ENCODE measurements at regions of chr12 and their contacts with region 1.

Region 1: GRCh38 chr12:71562676-71563595 is 100.7 kb downstream of the ZFC3H1 start:
- DNase-seq: no peak
- H3K4me3 ChIP-seq: no peak overlapping the region
- H3K27ac ChIP-seq: no peak overlapping the region
- H3K4me1 ChIP-seq: no peaks in the 10 kb centered on the region
- H3K27me3 ChIP-seq: no peaks in the 10 kb centered on the region
- CTCF ChIP-seq: no peak
- EP300 ChIP-seq: no peak
- POLR2A ChIP-seq: no peak

Region 2: DNA sequence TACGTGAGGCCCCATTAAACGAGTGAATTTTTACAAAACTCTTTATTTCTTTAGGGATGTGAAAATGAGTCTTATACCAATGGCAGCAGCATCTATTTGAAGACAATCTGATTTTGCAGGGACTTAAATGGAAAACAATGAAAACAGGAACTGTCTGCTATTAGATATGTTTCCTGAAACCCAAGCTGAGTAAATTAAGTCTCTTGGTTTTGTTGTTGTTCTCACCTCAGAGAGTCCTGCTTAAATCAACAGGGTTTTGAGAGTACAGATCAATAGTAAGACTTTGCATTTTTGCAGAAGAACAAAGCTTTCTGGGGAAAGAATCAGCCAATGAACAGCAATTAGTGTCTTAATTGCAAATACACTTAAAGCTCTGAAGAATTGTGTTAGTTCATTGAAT is 162.5 kb before region 1 on chr12:
- in situ Hi-C with region 1: no loop called
- intact Hi-C with region 1: loop called (anchors 5 kb)
- DNase-seq: no peak
- H3K4me3 ChIP-seq: no peak overlapping the region
- H3K27ac ChIP-seq: no peak overlapping the region
- H3K4me1 ChIP-seq: no peaks in the 10 kb centered on the region
- H3K27me3 ChIP-seq: no peaks in the 10 kb centered on the region
- CTCF ChIP-seq: no peak
- EP300 ChIP-seq: no peak
- POLR2A ChIP-seq: no peak

Region 3: DNA sequence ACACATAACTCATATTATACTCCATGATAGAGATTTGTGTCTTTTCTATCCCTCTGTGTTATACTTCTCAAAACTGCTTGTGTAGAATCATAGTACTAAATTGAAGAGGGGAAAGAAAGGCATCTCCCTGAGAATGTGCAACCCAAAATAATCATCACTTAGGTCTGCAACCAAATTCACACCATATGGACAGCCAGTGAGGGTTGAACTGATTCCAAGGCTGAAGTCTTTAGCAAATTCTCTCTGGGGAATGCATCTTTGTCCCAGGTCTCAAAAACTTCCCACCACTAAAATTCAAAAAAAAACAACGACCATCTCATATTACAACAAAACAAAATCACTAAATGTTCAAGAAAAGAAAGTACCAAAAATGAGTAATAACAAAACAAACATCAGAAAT is 89.7 kb after region 1 on chr12:
- in situ Hi-C with region 1: no loop called
- intact Hi-C with region 1: no loop called
- DNase-seq: no peak
- H3K4me3 ChIP-seq: no peak overlapping the region
- H3K27ac ChIP-seq: no peak overlapping the region
- H3K4me1 ChIP-seq: peaks cover 5 to 30% (median 16%) of the 10 kb centered on the region in 4 donors
- H3K27me3 ChIP-seq: no peaks in the 10 kb centered on the region
- CTCF ChIP-seq: no peak
- EP300 ChIP-seq: no peak
- POLR2A ChIP-seq: no peak

Region 4: DNA sequence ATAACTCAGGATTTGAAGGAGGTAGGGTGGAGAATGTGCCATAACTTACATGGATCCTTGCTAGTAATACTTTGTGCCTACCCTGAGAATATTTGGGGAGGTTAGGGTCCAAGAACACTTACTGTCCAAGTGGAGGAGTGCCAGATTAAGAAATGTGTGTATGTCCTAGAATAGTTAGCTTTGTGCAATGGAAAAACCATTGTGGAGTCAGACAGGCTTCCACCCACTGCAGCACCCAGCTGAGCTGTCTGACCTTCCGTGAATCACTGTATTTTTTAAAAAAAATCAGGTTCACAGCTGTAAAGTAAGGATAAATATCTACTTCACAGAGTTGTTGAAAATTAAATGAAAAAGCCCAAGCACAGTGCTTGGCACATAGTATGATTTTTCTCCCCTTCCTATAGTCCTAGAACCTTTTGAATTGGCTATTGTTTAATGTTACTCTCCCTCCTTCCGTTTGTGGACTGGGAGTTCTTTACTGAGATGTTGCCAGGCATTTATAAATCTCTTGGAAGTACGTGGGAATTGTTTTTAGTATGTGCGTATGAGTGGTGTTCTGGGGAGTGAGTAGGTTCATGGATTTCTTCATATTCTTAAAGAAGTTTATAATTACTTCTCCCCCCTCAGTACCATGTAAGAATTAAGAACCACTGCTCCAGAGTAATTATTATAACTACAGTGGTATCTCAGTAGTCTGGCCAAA is 200.9 kb after region 1 on chr12:
- in situ Hi-C with region 1: no loop called
- intact Hi-C with region 1: no loop called
- DNase-seq: no peak
- H3K4me3 ChIP-seq: no peak overlapping the region
- H3K27ac ChIP-seq: no peak overlapping the region
- H3K4me1 ChIP-seq: peaks cover 0 to 23% (median 0%) of the 10 kb centered on the region in 4 donors
- H3K27me3 ChIP-seq: no peaks in the 10 kb centered on the region
- CTCF ChIP-seq: no peak
- EP300 ChIP-seq: no peak
- POLR2A ChIP-seq: no peak

Measured in transverse colon (tissue), 4 donors.